ENCODE measurements at regions of chr5 and their contacts with region 1.

Region 1: DNA sequence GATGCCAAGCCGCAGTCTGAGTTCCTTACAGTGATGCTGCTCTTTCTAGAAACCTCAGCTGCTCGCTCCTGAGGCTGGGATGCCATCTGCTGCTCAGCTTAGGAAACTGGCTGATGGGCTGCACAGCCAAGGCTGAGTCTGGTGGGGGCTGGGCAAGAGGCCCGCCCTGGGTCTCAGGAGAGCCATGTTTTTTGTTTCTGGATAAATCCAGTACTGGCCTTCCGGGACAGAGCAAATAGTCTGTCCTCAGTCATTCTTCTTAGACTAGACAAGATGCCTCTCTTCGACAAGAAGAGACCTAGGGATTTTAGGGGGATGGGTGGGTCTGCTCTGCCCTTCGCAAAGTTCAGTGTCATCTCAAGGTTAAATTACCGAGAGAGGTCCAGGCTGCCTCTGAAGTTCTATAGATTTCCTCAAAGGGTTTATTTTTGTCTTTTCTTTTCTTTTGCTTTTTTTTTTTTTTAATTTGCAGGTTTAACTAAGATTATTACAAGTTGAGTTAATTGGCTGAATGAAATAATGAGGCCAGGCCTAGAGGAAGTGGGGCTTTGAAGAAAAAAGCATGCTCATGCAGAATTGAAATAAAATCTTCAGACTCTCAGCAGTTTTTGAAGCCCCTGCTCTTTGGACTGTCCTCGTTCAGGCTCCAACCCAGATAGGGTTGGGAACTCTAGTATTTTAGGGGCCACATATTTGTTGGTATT is 30.6 kb upstream of the MATR3 start:
- DNase-seq: peak; percentile 56 to 94
- H3K4me3 ChIP-seq: no peak overlapping the region
- H3K27ac ChIP-seq: peak overlapping the region; percentile 28 to 49
- H3K4me1 ChIP-seq: peaks cover 0 to 8% of the 10 kb centered on the region in 2 donors
- H3K27me3 ChIP-seq: no peaks in the 10 kb centered on the region
- CTCF ChIP-seq: peak; percentile 90 to 96 (median 95)

Region 2: DNA sequence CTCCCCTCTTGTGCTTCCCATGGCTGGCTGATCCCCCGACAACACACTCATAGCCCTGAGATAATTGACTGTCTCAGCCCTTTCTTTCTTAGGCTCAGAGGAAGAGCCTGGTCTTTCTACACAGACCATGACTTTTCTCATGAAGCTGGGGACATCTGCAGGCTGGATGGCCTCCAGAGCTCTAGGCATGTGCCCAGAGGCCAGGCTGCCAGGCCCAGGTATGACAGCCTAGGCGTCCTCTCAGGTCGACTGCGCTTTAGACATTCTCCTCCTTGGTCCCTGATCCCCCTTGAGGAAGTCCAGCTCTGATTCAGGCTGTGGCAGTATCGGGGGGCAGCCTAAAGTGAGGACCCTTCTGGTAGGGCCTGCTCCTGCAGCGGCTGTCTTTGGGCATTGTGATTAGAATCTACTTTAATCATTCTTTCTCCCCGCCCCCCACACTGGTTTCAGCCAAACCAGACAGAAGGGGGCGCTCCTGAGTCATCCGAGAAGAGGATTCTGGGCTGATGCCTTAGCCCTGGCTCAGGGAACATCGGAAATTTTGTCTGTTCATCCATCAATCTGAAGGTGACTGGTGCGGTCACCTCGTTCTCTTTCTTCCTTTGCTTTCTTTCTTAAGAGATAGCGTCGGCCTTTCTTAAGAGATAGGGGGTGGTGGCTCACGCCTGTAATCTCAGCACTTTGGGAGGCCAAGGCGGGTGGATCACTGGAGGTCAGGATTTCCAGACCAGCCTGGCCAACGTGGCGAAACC is 621.2 kb before region 1 on chr5:
- intact Hi-C with region 1: loop called (anchors 2 kb)
- DNase-seq: peak in 1 of 2 donors; percentile 75
- H3K4me3 ChIP-seq: no peak overlapping the region
- H3K27ac ChIP-seq: no peak overlapping the region
- H3K4me1 ChIP-seq: no peaks in the 10 kb centered on the region
- H3K27me3 ChIP-seq: no peaks in the 10 kb centered on the region
- CTCF ChIP-seq: peak; percentile 41 to 61 (median 56)

Region 3: GRCh38 chr5:138752951-138753793 is 509.7 kb before region 1 on chr5 and contains the start of gene CTNNA1:
- intact Hi-C with region 1: loop called (anchors 5 kb)
- DNase-seq: peak; percentile 13 to 86
- H3K4me3 ChIP-seq: peak within 1 kb of the TSS; percentile 93 to 98
- H3K27ac ChIP-seq: peak within 1 kb of the TSS; percentile 98 to 100
- H3K4me1 ChIP-seq: peaks cover 6 to 24% of the 10 kb centered on the region in 2 donors
- H3K27me3 ChIP-seq: no peaks in the 10 kb centered on the region
- CTCF ChIP-seq: no peak
- total RNA-seq, gene CTNNA1: 310 TPM

Region 4: GRCh38 chr5:138824924-138825863 is 437.7 kb before region 1 on chr5:
- intact Hi-C with region 1: loop called (anchors 10 kb)
- DNase-seq: no peak
- H3K4me3 ChIP-seq: no peak overlapping the region
- H3K27ac ChIP-seq: peak overlapping the region in 1 of 2 donors; percentile 40
- H3K4me1 ChIP-seq: peaks cover 0 to 20% of the 10 kb centered on the region in 2 donors
- H3K27me3 ChIP-seq: no peaks in the 10 kb centered on the region
- CTCF ChIP-seq: peak in 2 of 3 experiments; percentile 43 to 55

Region 5: GRCh38 chr5:139090581-139090980 is 172.3 kb before region 1 on chr5:
- intact Hi-C with region 1: loop called (anchors 1 kb)
- DNase-seq: no peak
- H3K4me3 ChIP-seq: no peak overlapping the region
- H3K27ac ChIP-seq: no peak overlapping the region
- H3K4me1 ChIP-seq: peaks cover 0 to 6% of the 10 kb centered on the region in 2 donors
- H3K27me3 ChIP-seq: no peaks in the 10 kb centered on the region
- CTCF ChIP-seq: no peak

Region 6: DNA sequence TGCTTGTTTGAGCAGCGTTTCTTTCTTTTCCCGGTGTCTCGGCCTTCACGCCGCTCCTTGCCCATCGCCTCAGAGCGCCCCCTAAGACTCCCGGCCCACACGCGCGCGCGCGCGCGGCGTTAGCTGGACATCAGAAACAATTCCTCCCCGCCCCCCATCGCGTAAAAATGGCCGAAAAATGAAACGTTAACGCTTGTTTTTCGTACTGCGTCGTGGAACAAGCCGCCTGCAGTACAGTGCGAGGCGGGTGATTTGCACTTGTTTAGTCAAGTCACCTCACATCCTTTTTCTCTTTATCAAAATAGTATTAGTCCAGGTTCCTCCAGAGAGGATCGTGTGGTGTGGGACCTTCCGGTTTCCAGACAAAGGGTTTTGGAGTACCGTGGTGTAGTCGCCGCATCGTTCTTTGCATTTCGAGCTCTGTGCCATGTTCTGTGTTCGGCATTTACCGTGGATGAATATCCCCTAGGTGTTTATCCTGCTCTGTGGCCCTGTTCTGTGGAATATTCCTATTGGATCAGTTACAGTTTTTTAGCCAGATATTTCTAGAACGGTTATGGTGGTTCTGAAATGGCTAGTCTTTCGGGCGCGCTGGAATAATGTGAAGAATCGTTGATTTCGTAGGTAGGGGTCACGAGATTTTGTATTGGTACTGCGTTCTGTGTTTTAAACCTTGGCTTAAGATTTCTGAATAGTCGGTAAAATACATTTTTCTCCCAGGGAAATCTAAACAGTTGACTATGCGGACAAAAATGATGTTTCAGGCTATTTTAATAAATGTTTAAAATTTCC is 31.7 kb after region 1 on chr5:
- intact Hi-C with region 1: no loop called
- DNase-seq: peak in 1 of 2 donors; percentile 83
- H3K4me3 ChIP-seq: peak overlapping the region; percentile 88 to 89
- H3K27ac ChIP-seq: peak overlapping the region; percentile 100
- H3K4me1 ChIP-seq: peaks cover 13 to 38% of the 10 kb centered on the region in 2 donors
- H3K27me3 ChIP-seq: no peaks in the 10 kb centered on the region
- CTCF ChIP-seq: peak in 2 of 3 experiments; percentile 12 to 35

Measured in ascending aorta (tissue), 2 donors.